ENCODE measurements at regions of chr6 and their contacts with region 1.

Region 1: GRCh38 chr6:26122793-26123674 is 35.8 kb downstream of the HFE start:
- DNase-seq: peak; percentile 100
- ATAC-seq: peak; percentile 71
- H3K4me3 ChIP-seq: peak overlapping the region; percentile 73 to 99 (median 83)
- H3K27ac ChIP-seq: peak overlapping the region; percentile 93
- H3K4me1 ChIP-seq: peaks cover 61% of the 10 kb centered on the region
- H3K27me3 ChIP-seq: no peaks in the 10 kb centered on the region; a peak in 2 of 5 replicates
- CTCF ChIP-seq: no peak
- EP300 ChIP-seq: peak; percentile 23 to 94; a peak in 2 of 4 replicates
- POLR2A ChIP-seq: peak; percentile 87 to 98
- RAD21 ChIP-seq: peak; percentile 49

Region 2: GRCh38 chr6:25804804-25805203 is 318.2 kb before region 1 on chr6:
- CTCF ChIA-PET with region 1: no interaction called
- POLR2A ChIA-PET with region 1: no interaction called
- in situ Hi-C with region 1: no loop called
- intact Hi-C with region 1: no loop called
- DNase-seq: no peak
- ATAC-seq: no peak
- H3K4me3 ChIP-seq: no peak overlapping the region
- H3K27ac ChIP-seq: no peak overlapping the region
- H3K4me1 ChIP-seq: no peaks in the 10 kb centered on the region
- H3K27me3 ChIP-seq: no peaks in the 10 kb centered on the region
- CTCF ChIP-seq: no peak
- EP300 ChIP-seq: no peak
- POLR2A ChIP-seq: no peak
- RAD21 ChIP-seq: no peak

Region 3: DNA sequence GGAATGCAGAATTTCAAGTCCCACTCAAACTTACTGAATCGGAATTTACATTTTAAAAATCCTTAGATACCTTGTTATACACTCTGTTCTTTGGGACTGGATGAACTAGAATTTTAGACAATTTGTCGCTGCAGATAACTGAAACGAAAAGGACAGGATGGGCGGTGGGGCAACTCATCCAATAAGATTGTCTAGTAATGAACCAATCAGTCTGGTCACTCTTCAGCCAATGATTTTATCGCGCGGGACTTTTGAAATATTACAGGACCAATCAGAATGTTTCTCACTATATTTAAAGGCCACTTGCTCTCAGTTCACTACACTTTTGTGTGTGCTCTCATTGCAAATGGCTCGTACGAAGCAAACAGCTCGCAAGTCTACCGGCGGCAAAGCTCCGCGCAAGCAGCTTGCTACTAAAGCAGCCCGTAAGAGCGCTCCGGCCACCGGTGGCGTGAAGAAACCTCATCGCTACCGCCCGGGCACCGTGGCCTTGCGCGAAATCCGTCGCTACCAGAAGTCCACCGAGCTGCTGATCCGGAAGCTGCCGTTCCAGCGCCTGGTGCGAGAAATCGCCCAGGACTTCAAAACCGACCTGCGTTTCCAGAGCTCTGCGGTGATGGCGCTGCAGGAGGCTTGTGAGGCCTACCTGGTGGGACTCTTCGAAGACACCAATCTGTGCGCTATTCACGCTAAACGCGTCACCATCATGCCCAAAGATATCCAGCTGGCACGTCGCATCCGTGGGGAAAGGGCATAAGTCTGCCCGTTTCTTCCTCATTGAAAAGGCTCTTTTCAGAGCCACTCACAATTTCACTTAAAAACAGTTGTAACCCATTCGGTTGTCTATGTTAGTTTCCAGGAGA is 77.7 kb before region 1 on chr6:
- CTCF ChIA-PET with region 1: no interaction called
- POLR2A ChIA-PET with region 1: interaction called, 148 read pairs
- in situ Hi-C with region 1: no loop called
- intact Hi-C with region 1: no loop called
- DNase-seq: peak; percentile 99
- ATAC-seq: peak; percentile 74
- H3K4me3 ChIP-seq: peak overlapping the region; percentile 58 to 73 (median 63)
- H3K27ac ChIP-seq: peak overlapping the region; percentile 94
- H3K4me1 ChIP-seq: peaks cover 31% of the 10 kb centered on the region
- H3K27me3 ChIP-seq: no peaks in the 10 kb centered on the region; a peak in 1 of 5 replicates
- CTCF ChIP-seq: peak; percentile 62
- EP300 ChIP-seq: peak in 1 of 2 experiments; percentile 44; a peak in 2 of 4 replicates
- POLR2A ChIP-seq: peak; percentile 98 to 100
- RAD21 ChIP-seq: peak; percentile 69

Region 4: GRCh38 chr6:26103770-26104456 is 19.1 kb before region 1 on chr6:
- CTCF ChIA-PET with region 1: no interaction called
- POLR2A ChIA-PET with region 1: interaction called, 206 read pairs
- in situ Hi-C with region 1: no loop called
- intact Hi-C with region 1: loop called (anchors 1 kb)
- DNase-seq: peak; percentile 96
- ATAC-seq: peak; percentile 84
- H3K4me3 ChIP-seq: peak overlapping the region; percentile 64 to 79 (median 74)
- H3K27ac ChIP-seq: peak overlapping the region; percentile 92
- H3K4me1 ChIP-seq: peaks cover 29% of the 10 kb centered on the region
- H3K27me3 ChIP-seq: no peaks in the 10 kb centered on the region; a peak in 1 of 5 replicates
- CTCF ChIP-seq: peak; percentile 45
- EP300 ChIP-seq: peak; percentile 69 to 96; a peak in 3 of 4 replicates
- POLR2A ChIP-seq: peak; percentile 98 to 99
- RAD21 ChIP-seq: peak; percentile 52; the same call in 1 of the 2 replicates

Region 5: GRCh38 chr6:26187981-26188635 is 65.1 kb after region 1 on chr6:
- CTCF ChIA-PET with region 1: no interaction called
- POLR2A ChIA-PET with region 1: interaction called, 272 read pairs
- in situ Hi-C with region 1: no loop called
- intact Hi-C with region 1: no loop called
- DNase-seq: peak; percentile 76
- ATAC-seq: peak; percentile 63
- H3K4me3 ChIP-seq: peak overlapping the region; percentile 60 to 77 (median 62)
- H3K27ac ChIP-seq: peak overlapping the region; percentile 82
- H3K4me1 ChIP-seq: peaks cover 18% of the 10 kb centered on the region
- H3K27me3 ChIP-seq: no peaks in the 10 kb centered on the region
- CTCF ChIP-seq: no peak
- EP300 ChIP-seq: no peak
- POLR2A ChIP-seq: no peak
- RAD21 ChIP-seq: no peak

Region 6: GRCh38 chr6:26223650-26224546 is 100.9 kb after region 1 on chr6:
- CTCF ChIA-PET with region 1: no interaction called
- POLR2A ChIA-PET with region 1: interaction called, 184 read pairs
- in situ Hi-C with region 1: no loop called
- intact Hi-C with region 1: no loop called
- DNase-seq: peak; percentile 92
- ATAC-seq: peak; percentile 93
- H3K4me3 ChIP-seq: peak overlapping the region; percentile 49 to 70 (median 69)
- H3K27ac ChIP-seq: peak overlapping the region; percentile 94
- H3K4me1 ChIP-seq: peaks cover 33% of the 10 kb centered on the region
- H3K27me3 ChIP-seq: no peaks in the 10 kb centered on the region; a peak in 1 of 5 replicates
- CTCF ChIP-seq: no peak
- EP300 ChIP-seq: no peak
- POLR2A ChIP-seq: peak; percentile 50 to 56; a peak in 2 of 4 replicates
- RAD21 ChIP-seq: no peak

Region 7: GRCh38 chr6:27838058-27838944 is 1715.3 kb after region 1 on chr6:
- CTCF ChIA-PET with region 1: no interaction called
- POLR2A ChIA-PET with region 1: interaction called, 24 read pairs
- in situ Hi-C with region 1: no loop called
- intact Hi-C with region 1: loop called (anchors 5 kb)
- DNase-seq: peak; percentile 100
- ATAC-seq: peak; percentile 87
- H3K4me3 ChIP-seq: peak overlapping the region; percentile 79 to 84 (median 83)
- H3K27ac ChIP-seq: peak overlapping the region; percentile 92
- H3K4me1 ChIP-seq: peaks cover 34% of the 10 kb centered on the region
- H3K27me3 ChIP-seq: no peaks in the 10 kb centered on the region; a peak in 1 of 5 replicates
- CTCF ChIP-seq: no peak
- EP300 ChIP-seq: 0 out of 4 replicates have a peak, but pooled peaks of 1 of the 2 experiments have one; percentile 6
- POLR2A ChIP-seq: peak; percentile 82 to 99
- RAD21 ChIP-seq: no peak; the same call in 1 of the 2 replicates

Measured in HepG2 (cell line).